Lower leg skin (tissue), 4 donors: ENCODE measurements at regions of chr16 and their contacts with region 1.

Region 1: DNA sequence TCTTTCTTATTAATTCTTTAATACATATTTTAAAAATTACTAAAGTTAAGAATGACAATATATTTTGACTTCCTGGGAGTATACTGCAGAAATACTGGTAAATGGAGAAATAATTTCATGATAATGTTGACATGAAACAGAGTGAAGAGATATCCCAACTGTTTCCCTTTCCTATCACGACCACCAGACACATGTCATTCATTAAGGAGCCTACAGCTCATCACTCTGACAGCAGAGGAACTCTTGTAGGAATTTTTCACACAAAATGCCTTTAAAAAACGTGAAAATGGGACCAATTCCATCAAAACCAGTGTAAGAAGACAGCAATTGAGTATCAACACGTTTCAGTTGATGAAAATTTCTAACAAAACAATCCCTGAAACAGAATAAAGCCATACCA is 172.9 kb upstream of the CPHXL start:
- DNase-seq: no peak
- H3K4me3 ChIP-seq: no peak overlapping the region
- CTCF ChIP-seq: no peak
- POLR2A ChIP-seq: no peak

Region 2: GRCh38 chr16:75622761-75623605 is 276.2 kb before region 1 on chr16 and contains the start of gene ADAT1:
- intact Hi-C with region 1: no loop called
- DNase-seq: peak; percentile 98 to 100
- H3K4me3 ChIP-seq: peak within 1 kb of the TSS; percentile 57
- CTCF ChIP-seq: no peak
- POLR2A ChIP-seq: peak in 1 of 2 donors; percentile 13
- total RNA-seq, gene ADAT1: 36.5 to 48.9 (median 42.1) TPM

Region 3: GRCh38 chr16:75913958-75914357 is 14.8 kb after region 1 on chr16:
- intact Hi-C with region 1: loop called (anchors 1 kb)
- DNase-seq: no peak
- H3K4me3 ChIP-seq: no peak overlapping the region
- CTCF ChIP-seq: no peak
- POLR2A ChIP-seq: no peak